CD4-positive, alpha-beta T cell (primary cell): ENCODE measurements at regions of chr5 and their contacts with region 1.

Region 1: GRCh38 chr5:96572864-96573512 is 89.2 kb upstream of the CAST start:
- DNase-seq: no peak
- ATAC-seq: no peak
- H3K4me3 ChIP-seq: no peak overlapping the region
- H3K4me3 Mint-ChIP-seq: no peak overlapping the region
- H3K27ac ChIP-seq: no peak overlapping the region
- H3K27ac Mint-ChIP-seq: no peak overlapping the region
- H3K4me1 ChIP-seq: no peaks in the 10 kb centered on the region
- H3K4me1 Mint-ChIP-seq: no peaks in the 10 kb centered on the region
- H3K27me3 ChIP-seq: no peaks in the 10 kb centered on the region
- H3K27me3 Mint-ChIP-seq: peaks cover 6% of the 10 kb centered on the region
- CTCF ChIP-seq: no peak

Region 2: GRCh38 chr5:96509721-96510333 is 63.2 kb before region 1 on chr5:
- CTCF ChIA-PET with region 1: no interaction called
- POLR2A ChIA-PET with region 1: no interaction called
- intact Hi-C with region 1: loop called in 1 of 2 experiments (anchors 10 kb)
- DNase-seq: no peak
- ATAC-seq: no peak
- H3K4me3 ChIP-seq: no peak overlapping the region
- H3K4me3 Mint-ChIP-seq: no peak overlapping the region
- H3K27ac ChIP-seq: no peak overlapping the region
- H3K27ac Mint-ChIP-seq: no peak overlapping the region
- H3K4me1 ChIP-seq: no peaks in the 10 kb centered on the region
- H3K4me1 Mint-ChIP-seq: no peaks in the 10 kb centered on the region
- H3K27me3 ChIP-seq: no peaks in the 10 kb centered on the region
- H3K27me3 Mint-ChIP-seq: peaks cover 4% of the 10 kb centered on the region
- CTCF ChIP-seq: no peak